Transverse colon (tissue), 4 donors: ENCODE measurements at regions of chr7 and their contacts with region 1.

Region 1: GRCh38 chr7:2379821-2380450 is 23.5 kb upstream of the CHST12 start:
- DNase-seq: no peak
- H3K4me3 ChIP-seq: no peak overlapping the region
- H3K27ac ChIP-seq: no peak overlapping the region
- H3K4me1 ChIP-seq: no peaks in the 10 kb centered on the region
- H3K27me3 ChIP-seq: no peaks in the 10 kb centered on the region
- CTCF ChIP-seq: no peak
- EP300 ChIP-seq: no peak
- POLR2A ChIP-seq: no peak

Region 2: DNA sequence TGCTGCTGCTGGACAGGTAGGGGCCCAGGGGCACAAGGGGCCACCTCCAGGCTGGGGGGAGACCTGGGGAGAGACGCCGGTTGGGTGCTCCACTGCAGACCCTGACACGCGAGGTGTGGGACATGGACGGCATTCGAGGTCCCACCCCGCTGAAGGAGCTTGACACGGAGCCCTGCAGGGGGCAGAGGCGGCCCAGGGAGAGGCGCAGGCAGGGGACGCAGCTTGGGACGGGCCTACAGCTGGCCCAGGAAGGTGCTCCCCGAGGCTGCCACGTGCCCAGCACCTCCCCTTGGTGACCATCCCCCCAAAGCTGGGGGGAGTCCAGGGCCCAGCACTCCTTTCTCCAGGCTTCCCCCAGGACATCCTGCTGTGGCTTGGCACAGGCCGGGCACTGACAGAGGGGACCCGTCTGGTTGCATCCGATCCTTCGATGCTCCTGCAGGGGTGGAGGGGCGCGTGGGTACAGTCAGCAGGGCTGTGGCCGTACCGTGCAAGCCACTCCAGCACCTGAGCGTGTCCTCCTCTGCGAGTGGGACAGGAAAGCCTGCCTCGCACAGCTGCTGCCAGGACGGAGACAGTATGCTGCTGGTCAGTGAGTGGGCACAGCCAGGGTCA is 535.5 kb before region 1 on chr7:
- in situ Hi-C with region 1: no loop called
- intact Hi-C with region 1: loop called (anchors 2 kb)
- DNase-seq: no peak
- H3K4me3 ChIP-seq: no peak overlapping the region
- H3K27ac ChIP-seq: no peak overlapping the region
- H3K4me1 ChIP-seq: no peaks in the 10 kb centered on the region
- H3K27me3 ChIP-seq: no peaks in the 10 kb centered on the region
- CTCF ChIP-seq: no peak
- EP300 ChIP-seq: no peak
- POLR2A ChIP-seq: no peak

Region 3: GRCh38 chr7:2632733-2633537 is 253.0 kb after region 1 on chr7:
- in situ Hi-C with region 1: no loop called
- intact Hi-C with region 1: no loop called
- DNase-seq: peak; percentile 65
- H3K4me3 ChIP-seq: peak overlapping the region; percentile 81 to 83 (median 82)
- H3K27ac ChIP-seq: peak overlapping the region; percentile 83 to 90 (median 88)
- H3K4me1 ChIP-seq: peaks cover 12 to 59% (median 45%) of the 10 kb centered on the region in 4 donors
- H3K27me3 ChIP-seq: no peaks in the 10 kb centered on the region
- CTCF ChIP-seq: peak in 1 of 5 experiments; percentile 3
- EP300 ChIP-seq: no peak
- POLR2A ChIP-seq: peak; percentile 30

Region 4: DNA sequence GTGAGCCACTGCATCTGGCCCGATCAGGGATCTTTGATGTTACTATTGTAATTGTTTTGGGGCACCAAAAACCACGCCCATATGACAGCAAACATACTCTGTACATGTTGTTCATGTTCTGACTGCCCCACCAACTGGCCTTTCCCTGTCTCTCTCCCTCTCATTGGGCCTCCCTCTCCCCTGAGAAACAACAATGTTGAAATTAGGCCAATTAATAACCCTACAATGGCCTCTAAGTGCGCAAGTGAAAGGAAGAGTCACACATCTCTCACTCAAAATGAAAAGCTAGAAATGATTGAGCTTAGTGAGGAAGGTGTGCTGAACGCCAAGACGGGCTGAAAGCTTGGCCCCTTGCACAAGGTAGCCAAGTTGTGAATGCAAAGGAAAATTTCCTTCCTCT is 870.8 kb after region 1 on chr7:
- in situ Hi-C with region 1: no loop called
- intact Hi-C with region 1: no loop called
- DNase-seq: no peak
- H3K4me3 ChIP-seq: no peak overlapping the region
- H3K27ac ChIP-seq: no peak overlapping the region
- H3K4me1 ChIP-seq: no peaks in the 10 kb centered on the region
- H3K27me3 ChIP-seq: no peaks in the 10 kb centered on the region
- CTCF ChIP-seq: no peak
- EP300 ChIP-seq: no peak
- POLR2A ChIP-seq: no peak